Gastrocnemius medialis (tissue), 4 donors: ENCODE measurements at regions of chr7 and their contacts with region 1.

Region 1: GRCh38 chr7:112449902-112450806 is at the start of gene IFRD1:
- DNase-seq: peak; percentile 99
- ATAC-seq: peak; percentile 54 to 57
- H3K4me3 ChIP-seq: peak within 1 kb of the TSS; percentile 87 to 92 (median 90)
- H3K27ac ChIP-seq: peak within 1 kb of the TSS; percentile 96 to 100 (median 98)
- H3K4me1 ChIP-seq: peaks cover 32 to 48% of the 10 kb centered on the region in 2 donors
- H3K27me3 ChIP-seq: no peaks in the 10 kb centered on the region
- CTCF ChIP-seq: no peak
- POLR2A ChIP-seq: peak; percentile 100
- total RNA-seq, gene IFRD1: 37.8 to 70.8 (median 50.1) TPM

Region 2: DNA sequence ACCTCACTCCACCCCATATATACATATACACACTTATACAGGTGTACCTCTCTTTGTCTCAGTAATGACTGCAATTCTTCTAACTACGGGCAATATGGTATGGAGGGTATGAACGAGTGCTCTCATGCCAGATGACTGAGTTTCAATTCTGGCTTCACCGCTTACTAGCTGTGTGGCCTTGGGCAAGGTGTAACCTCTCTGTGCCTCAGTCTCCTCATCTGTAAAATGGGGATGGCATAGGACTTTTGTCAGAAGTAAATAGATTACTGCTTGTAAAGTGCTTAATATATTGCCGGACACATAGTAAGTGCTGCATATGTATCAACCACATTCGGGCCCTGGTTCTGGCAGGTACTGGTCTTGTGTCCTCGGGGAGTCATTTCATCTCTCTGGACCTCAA is 60.0 kb before region 1 on chr7:
- in situ Hi-C with region 1: no loop called
- intact Hi-C with region 1: loop called (anchors 5 kb)
- DNase-seq: no peak
- ATAC-seq: no peak
- H3K4me3 ChIP-seq: no peak overlapping the region
- H3K27ac ChIP-seq: peak overlapping the region in 2 of 4 donors; percentile 87 to 95
- H3K4me1 ChIP-seq: peaks cover 6 to 10% of the 10 kb centered on the region in 2 donors
- H3K27me3 ChIP-seq: no peaks in the 10 kb centered on the region
- CTCF ChIP-seq: no peak
- POLR2A ChIP-seq: no peak

Region 3: DNA sequence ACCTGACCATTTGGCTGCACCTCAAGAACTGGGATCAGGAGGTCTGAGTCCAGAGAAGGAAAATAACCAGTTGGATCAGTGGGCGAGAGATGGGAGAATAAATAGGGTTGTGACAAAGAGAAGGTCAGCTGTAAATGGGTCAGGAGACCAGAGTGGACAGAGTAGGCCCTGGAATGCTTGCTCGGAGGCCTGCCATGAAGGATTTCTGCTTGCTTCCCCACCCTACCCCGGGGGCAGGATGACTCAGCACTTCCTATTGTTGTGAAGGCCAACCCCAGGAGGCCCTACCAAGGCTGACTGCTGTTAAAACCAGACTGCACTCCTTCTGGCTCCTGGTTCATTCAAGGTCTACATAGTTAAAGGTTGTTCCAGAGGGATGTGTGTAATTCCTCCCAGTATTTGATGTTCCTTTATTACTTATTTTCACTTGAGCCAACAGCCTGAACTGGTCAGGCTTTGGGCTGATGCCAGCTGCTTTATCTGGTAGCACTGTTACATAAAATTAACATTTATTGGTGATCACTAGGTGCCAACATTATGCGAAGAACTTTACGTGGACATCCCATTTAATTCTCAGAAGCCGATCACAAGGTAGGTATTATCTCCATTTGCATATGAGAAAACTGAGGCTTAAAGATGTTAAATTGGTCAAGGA is 27.2 kb before region 1 on chr7:
- in situ Hi-C with region 1: no loop called
- intact Hi-C with region 1: loop called (anchors 2 kb)
- DNase-seq: peak; percentile 71 to 79
- ATAC-seq: peak; percentile 89 to 91
- H3K4me3 ChIP-seq: no peak overlapping the region
- H3K27ac ChIP-seq: peak overlapping the region; percentile 71 to 78 (median 73)
- H3K4me1 ChIP-seq: peaks cover 7 to 25% of the 10 kb centered on the region in 2 donors
- H3K27me3 ChIP-seq: no peaks in the 10 kb centered on the region
- CTCF ChIP-seq: no peak
- POLR2A ChIP-seq: no peak

Region 4: GRCh38 chr7:112481833-112482670 is 31.9 kb after region 1 on chr7:
- in situ Hi-C with region 1: no loop called
- intact Hi-C with region 1: loop called (anchors 1 kb)
- DNase-seq: peak; percentile 86 to 95
- ATAC-seq: peak; percentile 87 to 90
- H3K4me3 ChIP-seq: peak overlapping the region; percentile 16 to 32 (median 30)
- H3K27ac ChIP-seq: peak overlapping the region; percentile 87 to 96 (median 92)
- H3K4me1 ChIP-seq: peaks cover 43 to 53% of the 10 kb centered on the region in 2 donors
- H3K27me3 ChIP-seq: no peaks in the 10 kb centered on the region
- CTCF ChIP-seq: peak in 1 of 5 experiments; percentile 12
- POLR2A ChIP-seq: peak; percentile 80 to 91

Region 5: GRCh38 chr7:112495810-112496462 is 45.8 kb after region 1 on chr7:
- in situ Hi-C with region 1: no loop called
- intact Hi-C with region 1: loop called (anchors 2 kb)
- DNase-seq: peak; percentile 24 to 60
- ATAC-seq: peak; percentile 86 to 94
- H3K4me3 ChIP-seq: no peak overlapping the region
- H3K27ac ChIP-seq: no peak overlapping the region
- H3K4me1 ChIP-seq: peaks cover 0 to 4% of the 10 kb centered on the region in 2 donors
- H3K27me3 ChIP-seq: no peaks in the 10 kb centered on the region
- CTCF ChIP-seq: peak; percentile 60 to 79 (median 66)
- POLR2A ChIP-seq: no peak

Region 6: GRCh38 chr7:113040849-113041248 is 590.7 kb after region 1 on chr7:
- in situ Hi-C with region 1: no loop called
- intact Hi-C with region 1: no loop called
- DNase-seq: no peak
- ATAC-seq: no peak
- H3K4me3 ChIP-seq: no peak overlapping the region
- H3K27ac ChIP-seq: no peak overlapping the region
- H3K4me1 ChIP-seq: no peaks in the 10 kb centered on the region
- H3K27me3 ChIP-seq: no peaks in the 10 kb centered on the region
- CTCF ChIP-seq: no peak
- POLR2A ChIP-seq: no peak

Region 7: DNA sequence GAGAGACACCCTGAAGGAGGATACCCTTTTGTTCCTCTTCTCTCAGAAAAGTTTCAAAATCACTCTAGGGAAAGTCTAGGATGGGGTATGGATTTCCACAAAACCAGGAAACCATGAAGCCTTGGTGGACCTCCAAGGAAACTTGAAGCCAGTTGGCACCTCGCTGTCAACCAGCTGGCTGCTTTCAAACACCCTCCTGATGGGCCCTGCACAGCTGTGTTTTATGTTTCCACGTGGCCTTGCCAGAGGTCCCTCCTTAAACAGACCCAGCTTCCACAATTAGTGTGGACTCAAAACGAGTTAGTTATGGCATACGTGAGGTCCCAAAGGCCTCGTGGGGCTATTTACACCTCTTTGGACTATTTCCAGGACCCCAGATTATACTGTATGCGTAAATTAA is 1462.7 kb after region 1 on chr7:
- in situ Hi-C with region 1: no loop called
- intact Hi-C with region 1: loop called (anchors 5 kb)
- DNase-seq: peak; percentile 80 to 90
- ATAC-seq: peak; percentile 85 to 95
- H3K4me3 ChIP-seq: peak overlapping the region; percentile 34 to 67 (median 51)
- H3K27ac ChIP-seq: peak overlapping the region; percentile 87 to 90 (median 89)
- H3K4me1 ChIP-seq: peaks cover 29 to 39% of the 10 kb centered on the region in 2 donors
- H3K27me3 ChIP-seq: no peaks in the 10 kb centered on the region
- CTCF ChIP-seq: no peak
- POLR2A ChIP-seq: peak; percentile 18 to 46